ENCODE measurements at regions of chr22 and their contacts with region 1.

Region 1: GRCh38 chr22:44710474-44711457 is 8.8 kb downstream of the PRR5 start:
- DNase-seq: peak; percentile 65
- CTCF ChIP-seq: no peak

Region 2: DNA sequence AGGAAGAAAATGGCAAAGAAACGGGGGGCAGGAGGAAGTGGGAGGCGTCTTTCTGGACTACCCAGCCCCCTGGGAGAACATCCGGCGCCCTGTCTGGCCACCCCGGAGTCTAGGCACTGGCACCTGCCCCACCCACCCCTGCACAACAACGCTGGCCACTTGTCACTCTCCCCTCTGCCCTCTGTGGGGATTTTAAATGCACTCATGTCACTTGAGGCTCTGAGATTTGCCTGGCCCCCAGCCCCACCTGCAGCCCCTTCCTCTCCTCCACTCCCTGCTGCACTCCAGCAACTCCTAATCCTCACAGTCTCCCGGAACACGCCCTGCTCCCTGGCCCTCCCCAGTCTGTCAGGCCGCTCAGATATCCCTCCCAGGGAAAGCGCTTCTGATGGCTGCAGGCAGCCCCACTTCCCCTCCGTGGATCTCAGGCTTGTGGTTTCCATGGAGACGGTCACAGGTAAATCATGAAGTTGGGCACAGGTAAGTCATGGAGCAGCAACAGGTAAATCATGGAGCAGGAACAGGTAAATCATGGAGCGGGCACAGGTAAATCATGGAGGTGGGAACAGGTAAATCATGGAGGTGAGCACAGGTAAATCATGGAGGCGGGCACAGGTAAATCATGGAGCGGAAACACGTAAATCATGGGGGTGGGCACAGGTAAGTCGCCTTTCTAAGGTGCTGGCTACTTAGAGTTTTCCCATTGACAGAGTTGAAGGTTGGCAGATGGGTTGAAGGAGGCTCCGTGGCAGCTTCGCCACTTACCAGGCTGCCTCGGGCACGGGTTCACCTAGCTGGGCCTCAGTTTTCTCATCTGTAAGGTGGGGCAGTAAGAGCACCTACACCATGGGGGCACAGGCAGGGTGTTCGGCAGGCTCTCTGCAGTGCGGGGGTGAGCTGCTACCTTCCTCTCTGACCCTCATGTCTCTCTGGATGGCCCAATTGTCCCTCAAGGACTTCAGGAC is 319.0 kb before region 1 on chr22:
- CTCF ChIA-PET with region 1: no interaction called
- POLR2A ChIA-PET with region 1: no interaction called
- DNase-seq: no peak
- CTCF ChIP-seq: no peak

Region 3: GRCh38 chr22:44550711-44551491 is 159.9 kb before region 1 on chr22:
- CTCF ChIA-PET with region 1: no interaction called
- POLR2A ChIA-PET with region 1: no interaction called
- DNase-seq: peak; percentile 58
- CTCF ChIP-seq: no peak

Region 4: DNA sequence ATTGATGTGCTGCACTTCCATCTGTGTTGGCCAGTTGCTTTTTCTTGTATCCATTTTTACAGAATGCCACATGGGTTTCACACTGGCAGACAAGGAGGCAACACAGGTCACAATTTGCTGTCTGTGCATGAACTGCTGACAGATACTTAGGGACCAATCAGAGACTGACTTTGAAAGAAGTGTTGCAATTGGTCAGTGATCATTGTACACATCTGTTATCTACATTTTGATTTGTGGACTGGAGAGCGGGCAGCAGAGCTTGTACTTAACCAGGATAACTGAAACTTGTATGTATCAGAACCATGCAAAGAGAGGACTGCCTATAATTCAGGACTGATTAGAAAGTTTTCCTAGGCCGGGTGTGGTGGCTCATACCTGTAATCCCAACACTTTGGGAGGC is 13.0 kb after region 1 on chr22:
- CTCF ChIA-PET with region 1: interaction called, 10 read pairs
- POLR2A ChIA-PET with region 1: no interaction called
- DNase-seq: no peak
- CTCF ChIP-seq: no peak

Region 5: DNA sequence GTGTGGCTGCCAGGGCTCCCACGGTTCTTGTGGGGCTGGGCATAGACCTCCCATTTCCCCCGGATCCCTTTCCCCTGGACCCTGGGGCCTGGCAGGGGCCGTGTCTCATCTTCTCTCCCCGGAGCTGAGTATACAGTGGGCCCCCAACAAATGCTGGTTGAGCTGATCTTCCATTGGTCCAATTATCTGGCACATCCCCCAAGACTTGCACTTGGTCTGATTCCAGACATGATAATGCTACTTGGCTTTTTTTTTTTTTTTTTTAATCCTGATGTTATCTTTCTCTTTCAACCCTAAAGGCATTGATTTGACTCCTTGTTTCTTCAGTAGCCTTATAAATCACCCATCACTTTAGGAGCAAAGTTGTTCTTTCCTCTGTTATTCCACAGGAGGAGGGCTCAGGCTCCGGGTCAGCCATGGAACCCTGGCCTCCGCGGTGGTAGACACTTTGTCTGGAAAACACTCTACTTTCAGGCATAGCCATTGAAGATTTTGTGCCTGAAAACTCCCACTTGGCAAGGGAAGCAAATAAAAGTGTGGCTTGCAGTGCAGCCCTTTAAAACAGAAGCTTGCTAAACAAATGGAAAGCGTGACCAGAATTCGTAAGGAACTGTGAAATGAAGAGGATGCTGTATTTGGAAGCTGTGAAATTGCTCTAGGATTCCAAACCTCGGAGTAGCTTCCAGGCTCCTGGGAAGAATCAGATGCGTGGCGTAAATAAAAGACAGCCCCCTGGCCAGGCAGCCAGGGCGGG is 86.4 kb after region 1 on chr22:
- CTCF ChIA-PET with region 1: no interaction called
- POLR2A ChIA-PET with region 1: no interaction called
- DNase-seq: no peak
- CTCF ChIP-seq: no peak

Measured in GM10248 (cell line).